GM10248 (cell line): ENCODE measurements at regions of chr7 and their contacts with region 1.

Region 1: DNA sequence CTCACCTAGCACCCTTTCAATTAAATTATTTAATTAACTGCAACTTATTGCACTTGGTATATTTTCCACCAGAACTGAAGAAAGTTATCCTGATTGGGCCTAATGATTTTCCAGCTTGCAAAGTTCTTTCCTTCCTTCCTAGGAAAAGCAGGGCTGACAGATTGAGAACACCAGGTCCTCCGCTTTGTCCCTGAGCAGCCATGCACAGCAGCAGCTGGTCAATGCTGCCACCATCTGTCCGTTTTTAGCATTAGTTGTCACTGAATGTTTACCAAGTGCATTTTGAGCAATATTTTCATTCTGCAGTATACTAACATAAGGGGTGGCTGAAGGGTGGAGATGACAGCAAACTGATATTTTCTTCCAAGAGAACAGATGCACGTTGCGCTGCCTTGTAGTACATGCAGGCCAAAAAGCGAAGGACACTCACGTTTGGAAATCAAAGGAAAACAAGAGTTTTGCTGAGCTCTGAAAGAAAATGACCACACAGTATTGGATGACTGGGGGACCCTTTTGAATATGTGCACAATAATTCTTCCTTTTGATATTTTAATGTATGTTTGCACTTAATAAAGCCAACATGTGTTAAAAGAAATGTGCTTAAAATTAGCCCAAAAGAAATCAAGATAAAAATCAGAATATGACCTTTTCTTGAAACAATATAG is 248.8 kb upstream of the PTN start:
- DNase-seq: peak; percentile 34
- CTCF ChIP-seq: peak; percentile 62

Region 2: DNA sequence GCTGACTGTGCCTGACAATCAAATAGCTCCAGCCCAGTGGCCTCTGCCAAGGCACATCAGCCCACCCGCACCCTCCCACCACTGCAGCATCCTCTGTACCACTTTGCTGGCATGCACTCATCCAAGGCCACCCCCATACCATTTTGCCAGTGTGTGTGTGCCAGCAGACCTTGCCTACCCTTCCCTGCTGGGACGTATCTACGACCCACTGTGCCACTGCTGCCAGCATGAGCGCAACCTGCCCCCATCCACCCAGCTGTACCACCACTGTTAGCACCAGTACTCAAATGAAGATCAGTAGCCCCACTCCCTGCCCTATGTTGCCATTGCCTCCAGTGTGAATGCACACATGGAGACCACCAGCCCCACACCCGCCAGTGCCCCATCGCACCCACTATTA is 99.5 kb before region 1 on chr7:
- CTCF ChIA-PET with region 1: no interaction called
- POLR2A ChIA-PET with region 1: no interaction called
- DNase-seq: no peak
- CTCF ChIP-seq: no peak

Region 3: GRCh38 chr7:137579913-137580640 is 12.3 kb before region 1 on chr7:
- CTCF ChIA-PET with region 1: interaction called, 26 read pairs
- POLR2A ChIA-PET with region 1: no interaction called
- DNase-seq: no peak
- CTCF ChIP-seq: no peak

Region 4: GRCh38 chr7:137606061-137606674 is 13.8 kb after region 1 on chr7:
- CTCF ChIA-PET with region 1: interaction called, 27 read pairs
- POLR2A ChIA-PET with region 1: no interaction called
- DNase-seq: no peak
- CTCF ChIP-seq: peak; percentile 23

Region 5: GRCh38 chr7:137753954-137754851 is 161.8 kb after region 1 on chr7:
- CTCF ChIA-PET with region 1: no interaction called
- POLR2A ChIA-PET with region 1: no interaction called
- DNase-seq: no peak
- CTCF ChIP-seq: no peak

Region 6: GRCh38 chr7:137934941-137935883 is 342.8 kb after region 1 on chr7:
- CTCF ChIA-PET with region 1: no interaction called
- POLR2A ChIA-PET with region 1: no interaction called
- DNase-seq: peak; percentile 54
- CTCF ChIP-seq: no peak